ENCODE measurements at regions of chr4 and their contacts with region 1.

Region 1: DNA sequence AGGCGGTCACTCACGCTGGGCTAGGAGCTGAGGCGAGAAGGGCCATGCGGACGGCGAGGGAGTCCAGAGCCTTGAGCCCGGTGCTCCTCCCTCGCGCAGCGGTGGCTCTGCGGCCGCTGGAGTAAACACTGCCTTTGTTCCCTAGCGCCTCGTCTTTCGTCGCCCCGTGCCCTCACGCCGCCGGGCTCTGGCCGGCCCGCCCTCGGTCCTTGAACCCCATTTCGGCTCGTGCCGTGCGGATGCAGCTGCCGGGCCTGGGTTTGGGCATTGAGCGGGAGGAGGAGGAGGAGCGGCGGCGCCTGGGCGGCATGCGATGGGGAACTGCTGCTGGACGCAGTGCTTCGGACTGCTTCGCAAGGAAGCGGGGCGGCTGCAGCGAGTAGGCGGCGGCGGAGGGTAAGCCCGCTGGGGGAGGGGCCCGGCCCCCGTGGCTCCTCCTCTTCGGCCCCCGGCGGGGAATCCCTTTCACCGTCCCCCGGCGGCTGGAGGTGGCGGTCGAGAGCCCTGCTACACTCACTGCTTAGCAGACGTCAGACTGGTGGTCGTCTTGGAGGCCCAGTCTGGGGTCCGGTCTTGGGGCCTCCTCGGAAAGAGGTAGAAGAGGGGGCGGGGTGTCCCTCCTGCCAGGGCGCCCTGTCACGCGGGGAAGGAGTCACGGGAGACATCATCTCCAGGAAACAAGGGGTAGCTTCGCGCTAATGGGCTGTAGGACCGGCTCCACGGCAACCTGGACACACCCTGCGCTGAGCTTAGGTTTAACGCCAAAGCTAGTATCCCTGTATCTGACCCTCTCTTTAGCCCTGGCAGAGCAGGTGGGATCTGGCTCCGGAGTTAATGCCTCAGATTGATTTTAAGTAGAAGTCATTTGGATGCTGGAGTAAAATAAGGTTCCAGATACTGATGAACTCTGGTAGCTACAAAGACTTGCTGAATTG is at the start of gene AP1AR:
- DNase-seq: peak; percentile 95
- ATAC-seq: peak; percentile 73
- H3K4me3 ChIP-seq: peak within 1 kb of the TSS; percentile 78 to 98 (median 94)
- H3K4me3 Mint-ChIP-seq: peak within 1 kb of the TSS; percentile 99
- H3K27ac ChIP-seq: peak within 1 kb of the TSS; percentile 94 to 98
- H3K27ac Mint-ChIP-seq: peak within 1 kb of the TSS; percentile 99
- H3K4me1 ChIP-seq: peaks cover 13 to 19% of the 10 kb centered on the region in 2 donors
- H3K4me1 Mint-ChIP-seq: peaks cover 25% of the 10 kb centered on the region
- H3K27me3 ChIP-seq: no peaks in the 10 kb centered on the region
- H3K27me3 Mint-ChIP-seq: peaks cover 1% of the 10 kb centered on the region
- CTCF ChIP-seq: peak; percentile 54
- total RNA-seq, gene AP1AR: 20.3 and 24.0 TPM in 2 replicates

Region 2: GRCh38 chr4:112075129-112075753 is 156.8 kb before region 1 on chr4:
- CTCF ChIA-PET with region 1: no interaction called
- POLR2A ChIA-PET with region 1: no interaction called
- intact Hi-C with region 1: loop called (anchors 1 kb)
- DNase-seq: peak; percentile 50
- ATAC-seq: peak; percentile 64
- H3K4me3 ChIP-seq: no peak overlapping the region
- H3K4me3 Mint-ChIP-seq: no peak overlapping the region
- H3K27ac ChIP-seq: no peak overlapping the region
- H3K27ac Mint-ChIP-seq: no peak overlapping the region
- H3K4me1 ChIP-seq: no peaks in the 10 kb centered on the region
- H3K4me1 Mint-ChIP-seq: no peaks in the 10 kb centered on the region
- H3K27me3 ChIP-seq: no peaks in the 10 kb centered on the region
- H3K27me3 Mint-ChIP-seq: peaks cover 7% of the 10 kb centered on the region
- CTCF ChIP-seq: peak; percentile 80

Region 3: DNA sequence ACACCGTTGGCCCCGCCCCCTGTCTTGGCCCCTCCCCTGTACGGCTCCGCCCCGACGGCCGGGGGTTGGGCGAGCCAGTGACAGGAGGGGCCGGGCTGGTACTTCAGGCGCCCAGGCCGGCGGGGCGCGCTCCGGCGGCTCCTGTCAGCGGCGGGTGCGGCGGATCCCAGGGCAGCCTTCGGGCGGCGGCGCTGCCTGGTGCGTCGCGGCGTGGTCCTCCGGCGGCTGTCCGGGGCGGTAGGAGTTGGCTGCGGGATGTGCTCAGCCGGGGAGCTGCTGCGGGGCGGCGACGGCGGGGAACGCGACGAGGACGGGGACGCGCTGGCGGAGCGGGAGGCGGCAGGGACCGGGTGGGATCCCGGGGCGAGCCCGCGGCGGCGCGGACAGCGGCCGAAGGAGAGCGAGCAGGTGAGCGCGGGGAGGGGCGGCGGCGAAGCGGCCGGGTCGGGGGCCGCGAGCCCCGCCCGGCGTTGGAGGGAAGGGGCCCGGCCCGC is 86.7 kb before region 1 on chr4 and contains the start of gene FAM241A:
- CTCF ChIA-PET with region 1: interaction called, 4 read pairs
- POLR2A ChIA-PET with region 1: interaction called, 3 read pairs
- intact Hi-C with region 1: loop called (anchors 1 kb)
- DNase-seq: peak; percentile 89
- ATAC-seq: peak; percentile 98
- H3K4me3 ChIP-seq: peak within 1 kb of the TSS; percentile 66 to 97 (median 77)
- H3K4me3 Mint-ChIP-seq: peak within 1 kb of the TSS; percentile 89
- H3K27ac ChIP-seq: peak within 1 kb of the TSS; percentile 51 to 84
- H3K27ac Mint-ChIP-seq: peak within 1 kb of the TSS; percentile 74
- H3K4me1 ChIP-seq: peaks cover 8 to 12% of the 10 kb centered on the region in 2 donors
- H3K4me1 Mint-ChIP-seq: peaks cover 16% of the 10 kb centered on the region
- H3K27me3 ChIP-seq: no peaks in the 10 kb centered on the region
- H3K27me3 Mint-ChIP-seq: no peaks in the 10 kb centered on the region
- CTCF ChIP-seq: no peak
- total RNA-seq, gene FAM241A: 0.79 and 0.95 TPM in 2 replicates

Region 4: DNA sequence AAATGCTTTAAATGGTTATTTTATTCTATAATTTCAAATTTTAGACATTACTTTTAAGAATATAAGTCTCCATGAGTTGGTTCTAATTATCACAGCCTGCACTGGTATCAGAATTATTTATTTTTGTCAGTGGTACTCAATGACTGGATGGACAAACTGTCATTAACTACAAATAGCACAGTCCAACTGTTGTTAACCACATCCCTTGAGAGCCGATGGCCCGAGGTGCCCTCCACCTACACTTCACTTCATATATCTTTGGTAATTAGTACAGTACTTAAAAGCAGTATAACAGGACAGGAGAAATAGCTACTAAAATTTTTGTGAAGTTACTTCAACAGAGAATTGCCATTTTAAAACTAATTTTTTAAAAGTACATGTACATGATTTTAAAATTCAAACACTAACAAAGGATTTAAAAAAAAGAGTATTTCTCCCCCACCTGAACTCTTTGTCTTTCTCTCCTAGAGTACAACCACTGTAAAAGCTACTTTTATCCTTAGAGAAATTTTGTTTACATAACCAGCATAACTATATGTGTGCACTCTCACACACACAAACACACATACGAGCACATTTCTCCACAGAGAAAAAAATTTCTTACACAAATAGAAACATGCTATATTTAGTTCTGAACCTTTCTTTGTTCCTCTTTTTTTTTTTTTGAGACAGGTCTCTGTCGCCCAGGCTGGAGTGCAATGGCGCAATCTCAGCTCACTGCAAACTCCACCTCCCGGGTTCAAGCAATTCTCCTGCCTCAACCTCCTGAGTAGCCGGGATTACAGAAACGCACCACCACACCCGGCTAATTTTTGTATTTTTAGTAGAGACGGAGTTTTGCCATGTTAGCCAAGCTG is 47.2 kb after region 1 on chr4:
- CTCF ChIA-PET with region 1: interaction called, 19 read pairs
- POLR2A ChIA-PET with region 1: interaction called, 8 read pairs
- intact Hi-C with region 1: no loop called
- DNase-seq: peak; percentile 67
- ATAC-seq: peak; percentile 62
- H3K4me3 ChIP-seq: peak overlapping the region; percentile 8 to 76 (median 47)
- H3K4me3 Mint-ChIP-seq: peak overlapping the region; percentile 80
- H3K27ac ChIP-seq: peak overlapping the region; percentile 49 to 95
- H3K27ac Mint-ChIP-seq: peak overlapping the region; percentile 82
- H3K4me1 ChIP-seq: peaks cover 47 to 56% of the 10 kb centered on the region in 2 donors
- H3K4me1 Mint-ChIP-seq: peaks cover 64% of the 10 kb centered on the region
- H3K27me3 ChIP-seq: no peaks in the 10 kb centered on the region
- H3K27me3 Mint-ChIP-seq: no peaks in the 10 kb centered on the region
- CTCF ChIP-seq: no peak

Region 5: GRCh38 chr4:112312610-112313239 is 80.7 kb after region 1 on chr4:
- CTCF ChIA-PET with region 1: no interaction called
- POLR2A ChIA-PET with region 1: no interaction called
- intact Hi-C with region 1: loop called (anchors 2 kb)
- DNase-seq: peak; percentile 48
- ATAC-seq: peak; percentile 75
- H3K4me3 ChIP-seq: peak overlapping the region; percentile 11 to 50 (median 25)
- H3K4me3 Mint-ChIP-seq: no peak overlapping the region
- H3K27ac ChIP-seq: peak overlapping the region; percentile 68 to 75
- H3K27ac Mint-ChIP-seq: no peak overlapping the region
- H3K4me1 ChIP-seq: peaks cover 17 to 26% of the 10 kb centered on the region in 2 donors
- H3K4me1 Mint-ChIP-seq: peaks cover 20% of the 10 kb centered on the region
- H3K27me3 ChIP-seq: no peaks in the 10 kb centered on the region
- H3K27me3 Mint-ChIP-seq: no peaks in the 10 kb centered on the region
- CTCF ChIP-seq: no peak

Region 6: DNA sequence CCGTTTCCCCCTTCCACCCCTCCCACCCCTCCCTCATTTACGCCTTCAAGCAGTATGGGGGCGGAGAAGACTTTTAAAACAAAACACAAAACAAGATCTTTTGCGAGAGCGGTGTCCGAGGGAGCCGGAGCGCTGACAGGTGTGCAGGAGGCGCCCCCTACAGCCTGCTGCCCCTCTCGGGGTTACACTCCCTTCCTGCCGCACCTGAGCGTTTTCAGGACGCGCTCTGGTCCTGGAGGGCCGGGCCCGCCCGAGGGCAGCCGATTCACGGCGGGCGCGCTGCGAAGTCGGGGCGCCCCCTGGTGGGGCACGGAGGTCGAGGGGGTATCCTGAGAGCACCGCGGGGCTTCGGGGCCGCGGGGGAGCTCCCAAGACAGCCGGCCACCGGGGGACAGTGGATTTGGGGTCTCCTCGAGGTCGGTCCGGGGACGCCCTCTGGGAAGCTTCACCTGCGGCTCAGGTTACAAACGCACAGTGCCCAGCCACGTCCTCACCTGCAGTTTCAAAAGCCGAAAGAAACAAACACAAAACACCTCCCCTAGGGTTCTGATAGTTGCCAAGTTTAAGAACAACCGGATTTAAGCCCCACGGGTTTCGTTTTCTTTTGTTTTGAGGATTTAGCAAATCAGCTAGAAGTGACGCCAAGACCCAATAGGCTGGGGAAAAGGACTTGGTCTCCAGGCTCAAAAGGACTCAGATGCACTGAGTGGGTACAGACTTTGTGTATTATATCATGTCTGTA is 291.9 kb after region 1 on chr4:
- CTCF ChIA-PET with region 1: interaction called, 4 read pairs
- POLR2A ChIA-PET with region 1: no interaction called
- intact Hi-C with region 1: loop called (anchors 2 kb)
- DNase-seq: peak; percentile 83
- ATAC-seq: peak; percentile 89
- H3K4me3 ChIP-seq: peak overlapping the region; percentile 33 to 63 (median 54)
- H3K4me3 Mint-ChIP-seq: peak overlapping the region; percentile 90
- H3K27ac ChIP-seq: no peak overlapping the region
- H3K27ac Mint-ChIP-seq: peak overlapping the region; percentile 28
- H3K4me1 ChIP-seq: peaks cover 36 to 44% of the 10 kb centered on the region in 2 donors
- H3K4me1 Mint-ChIP-seq: peaks cover 40% of the 10 kb centered on the region
- H3K27me3 ChIP-seq: peaks cover 0 to 52% (median 48%) of the 10 kb centered on the region in 4 experiments
- H3K27me3 Mint-ChIP-seq: peaks cover 65% of the 10 kb centered on the region
- CTCF ChIP-seq: peak; percentile 90

Measured in B cell (primary cell).